GM12878 (cell line): ENCODE measurements at regions of chrX and their contacts with region 1.

Region 1: GRCh38 chrX:12843668-12844279 is 23.1 kb upstream of the TLR7 start:
- DNase-seq: peak; percentile 85
- ATAC-seq: peak; percentile 92
- H3K4me3 ChIP-seq: peak overlapping the region; percentile 42; the same call in 1 of the 2 replicates
- H3K27ac ChIP-seq: peak overlapping the region; percentile 100
- H3K4me1 ChIP-seq: peaks cover 29% of the 10 kb centered on the region
- H3K27me3 ChIP-seq: no peaks in the 10 kb centered on the region
- CTCF ChIP-seq: no peak
- EP300 ChIP-seq: peak in 1 of 2 experiments; percentile 57; a peak in 1 of 4 replicates
- POLR2A ChIP-seq: no peak
- RAD21 ChIP-seq: no peak

Region 2: GRCh38 chrX:12791257-12792228 is 52.2 kb before region 1 on chrX and contains the start of gene PRPS2:
- CTCF ChIA-PET with region 1: no interaction called
- POLR2A ChIA-PET with region 1: no interaction called
- RAD21 ChIA-PET with region 1: no interaction called
- SMC1A ChIA-PET with region 1: no interaction called
- in situ Hi-C with region 1: no loop called
- intact Hi-C with region 1: loop called (anchors 2 kb)
- DNase-seq: no peak
- ATAC-seq: peak; percentile 88
- H3K4me3 ChIP-seq: peak within 1 kb of the TSS; percentile 75
- H3K27ac ChIP-seq: peak within 1 kb of the TSS; percentile 58
- H3K4me1 ChIP-seq: no peaks in the 10 kb centered on the region
- H3K27me3 ChIP-seq: no peaks in the 10 kb centered on the region
- CTCF ChIP-seq: no peak
- EP300 ChIP-seq: no peak
- POLR2A ChIP-seq: peak; percentile 87
- RAD21 ChIP-seq: no peak
- polyA plus RNA-seq, gene PRPS2: 44.1 to 56.3 TPM

Region 3: DNA sequence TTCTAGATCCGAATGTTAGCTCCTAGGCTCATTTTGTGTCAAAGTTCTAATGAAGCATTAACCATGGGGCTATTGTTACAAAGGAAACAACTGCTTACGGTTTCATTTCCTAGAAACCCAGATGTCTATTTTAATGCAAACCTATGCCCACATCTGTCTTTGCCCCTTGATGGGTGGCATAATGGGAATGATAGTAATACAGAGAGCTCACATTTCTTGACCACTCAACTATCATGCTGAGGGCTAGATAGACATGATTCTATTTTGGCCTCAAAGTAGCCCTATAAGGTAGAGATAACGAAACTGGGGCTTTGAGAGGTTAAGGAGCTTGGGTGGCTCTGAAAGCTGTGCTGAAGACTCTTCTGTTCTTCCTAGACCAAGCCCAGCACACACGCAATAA is 25.0 kb after region 1 on chrX:
- CTCF ChIA-PET with region 1: interaction called, 8 read pairs
- POLR2A ChIA-PET with region 1: interaction called, 4 read pairs
- RAD21 ChIA-PET with region 1: interaction called, 15 read pairs
- SMC1A ChIA-PET with region 1: interaction called, 14 read pairs
- in situ Hi-C with region 1: no loop called
- intact Hi-C with region 1: loop called (anchors 1 kb)
- DNase-seq: peak; percentile 78
- ATAC-seq: peak; percentile 73
- H3K4me3 ChIP-seq: peak overlapping the region; percentile 63
- H3K27ac ChIP-seq: peak overlapping the region; percentile 97
- H3K4me1 ChIP-seq: peaks cover 28% of the 10 kb centered on the region
- H3K27me3 ChIP-seq: no peaks in the 10 kb centered on the region
- CTCF ChIP-seq: no peak
- EP300 ChIP-seq: peak in 1 of 2 experiments; percentile 48; a peak in 1 of 4 replicates
- POLR2A ChIP-seq: no peak; the same call in 1 of the 2 replicates
- RAD21 ChIP-seq: no peak

Region 4: GRCh38 chrX:13013363-13014110 is 169.8 kb after region 1 on chrX:
- CTCF ChIA-PET with region 1: no interaction called
- POLR2A ChIA-PET with region 1: no interaction called
- RAD21 ChIA-PET with region 1: no interaction called
- SMC1A ChIA-PET with region 1: no interaction called
- in situ Hi-C with region 1: no loop called
- intact Hi-C with region 1: no loop called
- DNase-seq: no peak
- ATAC-seq: peak; percentile 87
- H3K4me3 ChIP-seq: peak overlapping the region; percentile 14
- H3K27ac ChIP-seq: peak overlapping the region; percentile 96
- H3K4me1 ChIP-seq: peaks cover 63% of the 10 kb centered on the region
- H3K27me3 ChIP-seq: no peaks in the 10 kb centered on the region
- CTCF ChIP-seq: no peak
- EP300 ChIP-seq: 0 out of 4 replicates have a peak, but pooled peaks of 1 of the 2 experiments have one; percentile 2
- POLR2A ChIP-seq: no peak
- RAD21 ChIP-seq: no peak

Region 5: GRCh38 chrX:14013054-14013453 is 1169.3 kb after region 1 on chrX:
- CTCF ChIA-PET with region 1: no interaction called
- POLR2A ChIA-PET with region 1: no interaction called
- RAD21 ChIA-PET with region 1: no interaction called
- SMC1A ChIA-PET with region 1: no interaction called
- in situ Hi-C with region 1: no loop called
- intact Hi-C with region 1: no loop called
- DNase-seq: no peak
- ATAC-seq: no peak
- H3K4me3 ChIP-seq: no peak overlapping the region
- H3K27ac ChIP-seq: no peak overlapping the region
- H3K4me1 ChIP-seq: no peaks in the 10 kb centered on the region
- H3K27me3 ChIP-seq: no peaks in the 10 kb centered on the region
- CTCF ChIP-seq: no peak
- EP300 ChIP-seq: no peak
- POLR2A ChIP-seq: no peak
- RAD21 ChIP-seq: no peak